ENCODE measurements at regions of chr20 and their contacts with region 1.

Region 1: GRCh38 chr20:45538209-45538799 is 978 bp downstream of the WFDC6 start:
- DNase-seq: no peak

Region 2: DNA sequence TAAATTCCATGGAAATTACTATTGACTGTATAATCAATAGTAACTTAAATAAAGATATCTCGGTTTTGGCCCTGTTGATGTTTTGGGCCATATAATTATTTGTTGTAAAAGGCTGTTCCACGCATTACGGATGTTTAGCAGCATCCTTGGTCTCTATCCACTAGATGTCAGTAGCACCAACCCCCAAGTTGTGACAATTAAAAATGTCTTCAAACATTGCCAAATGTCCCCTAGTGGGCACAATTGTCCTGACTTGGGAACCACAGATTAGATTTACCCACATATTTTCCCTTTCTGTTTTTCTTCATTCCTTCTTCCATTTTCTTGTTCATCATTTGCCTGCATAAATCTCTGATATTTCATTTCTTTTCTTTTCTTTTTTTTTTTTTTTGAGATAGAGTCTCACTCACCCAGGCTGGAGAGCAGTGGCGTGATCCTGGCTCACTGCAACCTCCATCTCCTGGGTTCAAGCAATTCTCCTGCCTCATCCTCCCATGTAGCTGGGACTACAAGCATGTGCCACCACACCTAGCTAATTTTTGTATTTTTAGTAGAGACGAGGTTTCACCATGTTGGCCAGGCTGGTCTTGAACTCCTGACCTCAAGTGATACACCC is 54.4 kb after region 1 on chr20:
- intact Hi-C with region 1: loop called in 1 of 2 experiments (anchors 10 kb)
- DNase-seq: no peak

Measured in posterior vena cava (tissue), 2 donors.